Endothelial cell of umbilical vein (primary cell): ENCODE measurements at regions of chr1 and their contacts with region 1.

Region 1: DNA sequence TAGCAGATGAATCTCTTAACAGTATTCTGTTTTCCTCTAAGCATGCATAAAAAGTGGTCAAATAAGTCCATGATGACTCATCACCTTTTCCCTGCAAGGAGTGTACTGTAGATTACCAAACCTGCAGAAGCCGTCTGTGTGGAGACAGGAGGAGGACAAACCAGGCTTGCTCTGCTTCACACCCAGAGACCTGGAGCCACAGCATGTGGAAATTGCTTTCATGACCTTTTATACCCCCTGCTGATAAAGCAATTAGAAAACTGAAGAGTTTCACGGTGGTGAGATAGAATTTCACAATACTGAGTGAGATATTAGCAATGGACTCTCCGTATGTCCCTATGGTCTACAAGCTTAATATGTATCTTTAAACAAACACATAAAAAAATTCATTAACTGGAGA is 9.3 kb downstream of the CORT start:
- DNase-seq: peak; percentile 56
- H3K4me3 ChIP-seq: no peak overlapping the region
- H3K27ac ChIP-seq: no peak overlapping the region
- H3K4me1 ChIP-seq: peaks cover 20% of the 10 kb centered on the region
- H3K27me3 ChIP-seq: no peaks in the 10 kb centered on the region
- CTCF ChIP-seq: no peak
- POLR2A ChIP-seq: no peak

Region 2: GRCh38 chr1:10283318-10283984 is 175.7 kb before region 1 on chr1:
- CTCF ChIA-PET with region 1: no interaction called
- POLR2A ChIA-PET with region 1: no interaction called
- dilution Hi-C with region 1: no loop called
- intact Hi-C with region 1: no loop called
- DNase-seq: no peak
- H3K4me3 ChIP-seq: no peak overlapping the region
- H3K27ac ChIP-seq: no peak overlapping the region
- H3K4me1 ChIP-seq: no peaks in the 10 kb centered on the region
- H3K27me3 ChIP-seq: no peaks in the 10 kb centered on the region
- CTCF ChIP-seq: no peak
- POLR2A ChIP-seq: no peak

Region 3: DNA sequence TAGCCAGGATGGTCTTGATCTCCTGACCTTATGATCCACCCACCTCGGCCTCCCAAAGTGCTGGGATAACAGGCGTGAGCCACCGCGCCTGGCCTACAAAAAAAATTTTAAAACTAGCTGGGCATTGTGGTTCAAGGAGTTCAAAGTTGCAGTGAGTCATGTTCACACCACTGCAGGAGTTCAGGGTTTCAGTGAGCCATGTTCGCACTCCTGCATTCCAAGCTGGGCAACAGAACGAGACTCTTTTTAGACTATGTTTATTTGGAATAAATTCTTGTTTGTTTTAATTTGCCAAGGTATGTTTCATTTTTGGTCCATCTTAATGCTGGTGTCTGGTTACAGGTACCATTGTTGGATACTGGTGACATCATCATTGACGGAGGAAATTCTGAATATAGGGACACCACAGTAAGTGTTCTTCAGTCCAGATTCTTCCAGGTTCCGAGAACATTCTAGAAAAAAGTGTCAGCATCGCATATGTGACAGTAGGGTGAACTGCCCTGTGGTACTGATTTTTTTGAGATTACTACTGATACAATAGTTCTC is 56.4 kb before region 1 on chr1:
- CTCF ChIA-PET with region 1: no interaction called
- POLR2A ChIA-PET with region 1: no interaction called
- dilution Hi-C with region 1: no loop called
- intact Hi-C with region 1: no loop called
- DNase-seq: no peak
- H3K4me3 ChIP-seq: no peak overlapping the region
- H3K27ac ChIP-seq: peak overlapping the region; percentile 64
- H3K4me1 ChIP-seq: peaks cover 38% of the 10 kb centered on the region
- H3K27me3 ChIP-seq: no peaks in the 10 kb centered on the region
- CTCF ChIP-seq: no peak
- POLR2A ChIP-seq: no peak

Region 4: DNA sequence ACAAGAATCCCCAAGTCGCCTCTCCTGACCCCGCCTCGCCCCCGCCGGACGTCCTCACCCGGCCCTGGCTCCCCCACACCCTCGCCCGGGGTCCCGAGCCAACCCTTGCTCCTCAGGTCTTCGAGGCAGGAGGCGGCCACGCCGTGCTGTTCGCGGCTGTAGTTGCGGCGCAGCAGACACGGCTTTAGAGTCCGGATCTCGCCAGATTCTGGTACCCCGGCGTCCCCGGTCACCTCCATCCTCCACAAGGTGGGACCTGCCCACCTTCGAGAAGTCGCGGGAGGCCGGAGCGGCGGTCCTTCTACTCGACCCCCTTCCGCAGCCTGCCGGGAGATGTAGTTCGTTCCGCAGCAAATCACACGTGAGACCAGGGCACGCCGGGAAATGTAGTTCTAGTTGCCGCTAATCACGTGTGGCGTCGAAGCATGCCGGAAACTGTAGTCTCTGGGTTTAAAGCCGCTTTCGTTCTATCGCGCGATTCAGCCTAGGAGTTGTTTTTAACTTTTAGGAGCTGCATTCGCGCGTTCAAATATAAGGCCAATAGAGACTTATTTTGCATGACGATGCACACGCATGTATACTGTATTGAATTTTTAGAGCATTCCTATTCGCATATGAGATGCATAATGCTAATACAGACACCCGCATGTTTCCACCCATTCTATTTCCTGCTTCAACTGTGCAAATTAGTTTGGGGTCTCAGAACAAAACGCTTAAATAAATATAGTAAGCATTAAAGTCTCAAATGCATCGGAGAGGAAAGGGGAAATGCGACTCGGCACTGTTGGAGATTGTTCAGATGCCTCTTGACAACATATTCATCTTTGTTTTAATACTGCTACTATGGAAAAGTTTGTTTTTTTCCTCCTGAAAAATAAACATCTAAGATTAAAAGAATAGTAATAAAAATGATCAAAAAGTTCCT is 13.3 kb after region 1 on chr1 and contains the start of gene DFFA:
- CTCF ChIA-PET with region 1: no interaction called
- POLR2A ChIA-PET with region 1: no interaction called
- dilution Hi-C with region 1: no loop called
- intact Hi-C with region 1: loop called (anchors 1 kb)
- DNase-seq: peak; percentile 97
- H3K4me3 ChIP-seq: peak within 1 kb of the TSS; percentile 39 to 81 (median 66)
- H3K27ac ChIP-seq: peak within 1 kb of the TSS; percentile 25
- H3K4me1 ChIP-seq: peaks cover 8% of the 10 kb centered on the region
- H3K27me3 ChIP-seq: no peaks in the 10 kb centered on the region
- CTCF ChIP-seq: no peak
- POLR2A ChIP-seq: peak; percentile 78
- total RNA-seq, gene DFFA: 44.5 and 45.9 TPM in 2 replicates